ENCODE measurements at regions of chr9 and their contacts with region 1.

Region 1: GRCh38 chr9:134419684-134420076 is 93.4 kb downstream of the RXRA start:
- DNase-seq: no peak
- H3K4me3 ChIP-seq: no peak overlapping the region
- H3K27ac ChIP-seq: no peak overlapping the region
- H3K4me1 ChIP-seq: no peaks in the 10 kb centered on the region
- H3K27me3 ChIP-seq: no peaks in the 10 kb centered on the region
- CTCF ChIP-seq: no peak
- POLR2A ChIP-seq: no peak

Region 2: DNA sequence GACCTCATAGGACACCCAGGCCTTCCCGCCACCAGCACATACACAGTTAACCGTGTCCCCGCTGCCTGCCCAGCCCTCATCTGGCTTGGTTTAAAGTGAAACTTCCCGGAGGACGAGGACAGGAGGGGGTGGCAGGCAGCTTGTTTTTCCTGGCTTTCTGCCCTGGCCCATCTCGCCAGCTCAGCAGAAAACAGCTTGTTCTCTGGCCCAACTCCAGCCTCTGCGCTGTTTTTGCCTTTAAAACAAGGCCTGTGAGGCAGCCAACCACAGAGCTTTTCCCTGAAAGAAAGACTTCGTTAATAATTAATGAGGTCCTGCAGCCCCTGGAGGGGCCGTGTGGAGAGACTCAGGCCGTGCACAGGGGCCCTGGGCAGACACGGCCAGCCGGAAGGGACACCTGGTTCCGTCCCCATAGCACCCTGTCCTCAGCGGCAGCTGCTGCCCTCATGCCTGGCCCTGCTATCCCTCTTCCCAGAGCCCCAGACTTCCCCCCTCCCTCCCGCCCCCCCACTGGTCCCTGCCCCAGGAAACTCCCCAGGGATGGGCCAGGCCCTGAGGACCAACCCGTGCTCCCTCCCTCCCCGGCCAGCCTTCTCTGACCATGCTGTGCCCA is 15.3 kb after region 1 on chr9:
- intact Hi-C with region 1: no loop called
- DNase-seq: peak; percentile 94 to 96
- H3K4me3 ChIP-seq: peak overlapping the region in 2 of 3 donors; percentile 20 to 55
- H3K27ac ChIP-seq: peak overlapping the region; percentile 85 to 95
- H3K4me1 ChIP-seq: peaks cover 19 to 67% of the 10 kb centered on the region in 2 donors
- H3K27me3 ChIP-seq: no peaks in the 10 kb centered on the region
- CTCF ChIP-seq: no peak
- POLR2A ChIP-seq: no peak

Region 3: GRCh38 chr9:134469041-134469875 is 49.6 kb after region 1 on chr9:
- intact Hi-C with region 1: no loop called
- DNase-seq: no peak
- H3K4me3 ChIP-seq: no peak overlapping the region
- H3K27ac ChIP-seq: peak overlapping the region in 1 of 2 donors; percentile 74
- H3K4me1 ChIP-seq: no peaks in the 10 kb centered on the region
- H3K27me3 ChIP-seq: no peaks in the 10 kb centered on the region
- CTCF ChIP-seq: no peak
- POLR2A ChIP-seq: no peak

Region 4: DNA sequence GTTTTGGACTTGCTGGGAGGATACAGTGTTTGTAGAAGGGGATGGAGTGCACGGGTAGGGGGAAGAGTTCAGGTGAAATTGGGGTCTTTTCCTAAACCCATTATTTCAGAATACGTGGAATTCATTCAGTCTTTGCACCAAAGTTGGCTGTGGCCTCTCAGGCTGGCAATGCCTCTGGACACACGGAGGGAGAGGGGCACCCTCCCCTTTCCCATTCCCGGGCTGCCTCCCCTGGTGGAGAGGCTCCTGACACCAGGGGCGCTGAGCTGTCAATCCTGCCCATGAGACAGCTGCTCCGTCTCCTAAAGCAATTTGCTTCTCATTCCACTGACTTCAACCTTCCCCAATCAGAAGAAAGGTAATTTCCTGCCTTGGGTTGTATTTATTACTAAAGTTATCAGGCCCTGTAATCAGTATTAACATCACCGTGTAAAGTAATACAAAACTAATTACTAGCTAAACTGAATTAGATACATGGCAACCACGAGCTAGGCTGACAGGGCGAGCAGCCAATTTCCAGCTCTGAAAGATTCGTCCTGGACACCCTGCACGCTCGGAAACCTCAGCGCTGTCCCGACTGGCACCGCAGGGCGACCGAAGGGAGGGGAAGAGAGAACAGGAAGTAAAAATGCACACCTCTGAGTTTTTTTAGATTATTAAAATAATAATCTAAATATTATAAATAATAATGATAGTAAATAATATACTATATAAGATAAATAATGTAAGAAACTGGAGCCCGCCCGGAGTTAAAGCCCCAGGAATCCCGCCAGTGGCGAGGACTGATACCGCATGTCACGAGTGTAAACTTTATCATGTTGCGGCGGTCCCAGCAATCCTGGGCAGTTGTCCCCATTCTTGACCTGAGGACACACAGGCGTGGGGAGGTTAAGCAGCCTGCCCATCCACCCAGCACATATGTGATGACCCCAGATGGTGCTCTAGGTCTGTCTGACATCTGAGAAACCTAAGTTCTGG is 660.9 kb after region 1 on chr9:
- intact Hi-C with region 1: loop called (anchors 5 kb)
- DNase-seq: peak in 1 of 2 donors; percentile 33
- H3K4me3 ChIP-seq: no peak overlapping the region
- H3K27ac ChIP-seq: no peak overlapping the region
- H3K4me1 ChIP-seq: no peaks in the 10 kb centered on the region
- H3K27me3 ChIP-seq: peaks cover 0 to 12% of the 10 kb centered on the region in 2 donors
- CTCF ChIP-seq: no peak
- POLR2A ChIP-seq: no peak

Measured in breast epithelium (tissue), 4 donors.